B cell (primary cell): ENCODE measurements at regions of chr10 and their contacts with region 1.

Region 1: GRCh38 chr10:117167789-117168674 is 29.3 kb upstream of the KCNK18 start:
- DNase-seq: peak; percentile 67
- ATAC-seq: peak; percentile 82
- H3K4me3 ChIP-seq: no peak overlapping the region
- H3K4me3 Mint-ChIP-seq: peak overlapping the region; percentile 50
- H3K27ac ChIP-seq: no peak overlapping the region
- H3K27ac Mint-ChIP-seq: no peak overlapping the region
- H3K4me1 ChIP-seq: peaks cover 22 to 26% of the 10 kb centered on the region in 2 donors
- H3K4me1 Mint-ChIP-seq: peaks cover 17% of the 10 kb centered on the region
- H3K27me3 ChIP-seq: peaks cover 0 to 91% (median 72%) of the 10 kb centered on the region in 4 experiments
- H3K27me3 Mint-ChIP-seq: peaks cover 66% of the 10 kb centered on the region
- CTCF ChIP-seq: peak; percentile 74

Region 2: DNA sequence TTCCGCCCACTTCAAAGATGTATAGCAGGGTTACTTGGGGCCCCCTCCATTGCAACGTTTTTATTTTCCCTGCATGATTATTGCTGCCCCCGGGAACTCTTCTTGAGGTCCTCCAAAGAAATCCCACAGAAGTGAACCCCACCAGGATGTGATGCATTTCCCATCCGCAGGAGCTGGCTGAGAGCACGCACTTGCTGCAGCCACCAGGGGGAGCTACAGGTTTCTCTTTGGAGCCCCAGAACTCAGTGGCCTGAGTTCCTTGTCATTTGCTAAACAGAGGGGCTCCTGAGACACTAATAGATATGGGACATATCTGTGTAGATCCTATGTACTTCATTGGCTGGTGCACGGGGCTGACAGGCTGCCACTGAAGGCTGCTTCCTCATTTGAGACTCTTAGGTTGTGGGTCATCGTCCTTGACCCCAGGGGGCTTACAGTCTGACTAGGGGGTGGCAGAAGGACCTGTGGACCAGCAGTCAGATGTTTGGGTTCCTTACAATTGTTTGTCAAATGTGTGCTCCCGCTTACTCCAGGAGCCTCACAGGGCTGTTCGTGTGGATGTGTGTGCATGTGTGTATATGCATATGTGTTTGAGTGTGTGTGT is 371.0 kb before region 1 on chr10:
- CTCF ChIA-PET with region 1: interaction called, 158 read pairs
- POLR2A ChIA-PET with region 1: no interaction called
- intact Hi-C with region 1: no loop called
- DNase-seq: peak; percentile 66
- ATAC-seq: peak; percentile 49
- H3K4me3 ChIP-seq: no peak overlapping the region
- H3K4me3 Mint-ChIP-seq: no peak overlapping the region
- H3K27ac ChIP-seq: no peak overlapping the region
- H3K27ac Mint-ChIP-seq: no peak overlapping the region
- H3K4me1 ChIP-seq: no peaks in the 10 kb centered on the region
- H3K4me1 Mint-ChIP-seq: no peaks in the 10 kb centered on the region
- H3K27me3 ChIP-seq: no peaks in the 10 kb centered on the region
- H3K27me3 Mint-ChIP-seq: peaks cover 19% of the 10 kb centered on the region
- CTCF ChIP-seq: peak; percentile 79

Region 3: DNA sequence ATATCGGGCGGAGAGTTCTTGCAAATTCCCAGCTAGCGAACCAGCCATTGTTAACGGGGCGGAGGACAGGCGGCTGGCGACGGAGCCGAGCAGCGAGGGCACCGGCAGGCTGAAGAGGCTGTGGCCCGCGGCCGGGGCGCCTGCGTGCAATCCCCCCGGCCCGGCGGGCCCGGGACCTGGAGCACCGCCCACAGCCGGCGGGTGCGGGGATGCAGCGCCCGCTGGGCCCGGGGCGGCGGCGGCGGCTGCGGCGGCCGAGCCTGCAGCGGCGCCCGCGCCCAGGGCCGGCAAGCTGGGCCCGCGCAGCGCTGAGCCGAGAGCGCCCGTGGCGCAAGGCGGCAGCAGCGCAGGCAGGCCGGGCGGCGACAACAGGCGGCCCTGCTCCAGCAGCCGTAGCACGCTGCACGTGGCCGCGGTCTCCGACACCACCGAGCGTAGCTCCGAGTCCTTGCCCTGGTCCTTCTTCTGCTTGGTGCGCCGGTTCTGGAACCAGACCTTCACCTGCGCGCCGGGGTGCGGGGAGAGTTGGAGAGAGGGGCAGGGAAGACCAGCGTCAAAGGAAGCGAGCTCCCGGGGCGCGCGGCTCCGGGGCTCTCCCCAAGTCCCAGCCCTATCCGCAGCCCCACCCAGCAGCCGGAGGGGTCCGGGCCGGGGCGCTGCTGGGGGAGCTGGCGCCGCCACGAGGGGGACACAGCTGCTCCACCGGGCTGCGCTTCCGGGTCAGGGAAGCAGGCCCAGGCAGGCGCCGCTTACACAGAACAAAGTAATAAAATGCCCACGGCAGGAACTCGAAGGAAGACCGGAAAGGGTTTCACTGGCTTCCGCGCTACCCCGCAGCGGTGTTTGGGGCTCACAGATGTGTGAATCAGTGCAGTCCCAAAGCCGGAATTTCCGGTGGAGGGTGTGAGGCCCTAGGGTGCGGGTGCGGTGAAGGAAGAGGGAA is 33.7 kb before region 1 on chr10:
- CTCF ChIA-PET with region 1: no interaction called
- POLR2A ChIA-PET with region 1: no interaction called
- intact Hi-C with region 1: loop called (anchors 5 kb)
- DNase-seq: peak; percentile 13
- ATAC-seq: no peak
- H3K4me3 ChIP-seq: no peak overlapping the region
- H3K4me3 Mint-ChIP-seq: no peak overlapping the region
- H3K27ac ChIP-seq: no peak overlapping the region
- H3K27ac Mint-ChIP-seq: no peak overlapping the region
- H3K4me1 ChIP-seq: peaks cover 15 to 17% of the 10 kb centered on the region in 2 donors
- H3K4me1 Mint-ChIP-seq: peaks cover 22% of the 10 kb centered on the region
- H3K27me3 ChIP-seq: peaks cover 0 to 84% (median 54%) of the 10 kb centered on the region in 4 experiments
- H3K27me3 Mint-ChIP-seq: peaks cover 79% of the 10 kb centered on the region
- CTCF ChIP-seq: no peak